Sciatic nerve (tissue), 2 donors: ENCODE measurements at regions of chr3 and their contacts with region 1.

Region 1: DNA sequence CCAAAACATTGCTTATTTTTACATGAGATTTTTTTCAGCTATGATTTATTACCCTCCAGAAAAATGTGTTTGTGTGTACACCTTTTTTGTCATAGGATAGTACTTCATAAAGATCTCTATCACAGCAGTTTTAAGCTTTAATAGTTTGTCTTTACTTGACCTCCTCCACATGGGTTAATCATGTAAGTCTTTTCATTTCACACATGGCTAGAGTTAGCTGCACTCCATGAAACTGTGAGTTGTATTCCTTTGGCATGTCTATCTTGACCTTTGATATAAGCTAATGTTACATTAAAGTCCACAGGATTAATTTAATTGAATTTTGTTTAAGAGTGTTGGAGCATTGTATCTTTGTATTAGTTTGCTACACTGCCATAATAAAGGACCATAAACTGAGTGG is 217.1 kb downstream of the OTOL1 start:
- DNase-seq: no peak
- ATAC-seq: no peak

Region 2: GRCh38 chr3:160355826-160356225 is 1357.9 kb before region 1 on chr3:
- intact Hi-C with region 1: no loop called
- DNase-seq: no peak
- ATAC-seq: no peak

Region 3: DNA sequence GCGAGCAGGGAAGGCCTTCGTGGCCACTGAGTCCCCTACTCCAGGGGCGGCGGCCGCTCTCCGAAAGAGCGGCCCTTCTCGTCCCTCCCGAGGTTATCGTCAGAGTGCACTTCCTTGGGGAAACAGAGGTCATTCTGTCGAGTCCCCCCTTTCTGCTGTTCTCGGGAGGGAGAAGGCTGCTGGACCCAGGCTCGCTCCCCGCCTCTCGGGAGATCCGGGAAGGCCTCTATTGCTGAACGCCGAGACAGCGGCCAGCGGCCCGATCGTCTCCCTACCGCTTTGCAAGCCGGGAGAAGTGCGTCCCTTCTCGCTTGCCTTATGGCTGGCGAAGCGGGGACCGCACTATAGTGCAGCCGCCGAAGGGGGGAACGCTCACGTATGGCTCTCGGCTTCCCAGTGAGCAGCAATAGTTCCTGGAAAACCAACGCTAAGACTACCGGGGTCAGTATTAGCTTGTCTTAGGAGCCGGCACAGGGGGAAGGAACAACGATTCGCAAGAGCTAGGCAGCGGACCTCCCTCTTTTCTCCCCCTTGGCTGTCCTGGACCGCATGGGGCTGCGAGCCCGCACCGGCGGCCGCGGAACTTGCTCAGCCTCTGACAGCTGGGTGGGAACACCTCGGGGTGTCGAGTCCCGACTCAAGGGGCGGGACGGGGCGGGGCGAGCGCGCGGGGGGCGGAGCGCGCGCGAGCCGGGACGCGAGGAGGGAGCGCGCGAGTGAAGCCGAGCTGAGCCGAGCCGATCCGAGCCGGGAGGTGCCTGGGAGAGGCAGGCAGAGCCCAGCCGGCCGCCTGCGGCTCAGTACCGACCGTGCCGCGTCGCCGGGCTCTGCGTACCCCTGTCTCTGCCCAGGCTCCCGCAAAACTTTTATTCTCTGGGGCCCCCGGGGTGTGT is 958.6 kb before region 1 on chr3:
- intact Hi-C with region 1: loop called (anchors 5 kb)
- DNase-seq: peak; percentile 95
- ATAC-seq: peak; percentile 96